GM10248 (cell line): ENCODE measurements at regions of chr21 and their contacts with region 1.

Region 1: GRCh38 chr21:32392880-32393676 is at the start of gene URB1:
- DNase-seq: peak; percentile 99
- CTCF ChIP-seq: no peak

Region 2: DNA sequence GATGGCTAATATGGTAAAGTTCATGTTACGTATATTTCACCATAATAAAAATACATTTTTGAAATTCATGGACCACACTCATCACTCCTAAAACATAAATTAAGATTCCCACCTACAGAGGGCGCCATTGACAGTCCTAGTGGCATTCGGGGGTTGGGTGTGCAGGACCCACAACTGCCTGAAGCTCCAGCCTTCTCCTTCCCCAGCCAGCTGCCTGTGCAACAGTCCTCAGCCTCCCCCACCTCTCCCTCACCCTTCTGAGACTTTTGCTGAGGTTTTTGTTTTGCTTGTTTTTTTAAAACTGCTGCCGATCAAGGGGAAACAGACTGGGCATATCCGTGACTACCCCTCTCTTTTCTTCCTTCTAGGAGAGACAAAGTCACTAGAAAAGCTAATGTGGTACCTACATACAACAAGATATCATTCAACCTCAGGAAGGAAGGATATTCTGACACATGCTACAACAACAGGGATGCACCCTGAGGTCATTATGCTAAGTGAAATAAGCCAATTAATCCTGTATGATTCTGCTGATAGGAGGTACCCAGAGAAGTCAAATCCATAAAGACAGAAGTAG is 10.2 kb after region 1 on chr21:
- CTCF ChIA-PET with region 1: interaction called, 27 read pairs
- POLR2A ChIA-PET with region 1: no interaction called
- DNase-seq: peak; percentile 51
- CTCF ChIP-seq: peak; percentile 41

Region 3: DNA sequence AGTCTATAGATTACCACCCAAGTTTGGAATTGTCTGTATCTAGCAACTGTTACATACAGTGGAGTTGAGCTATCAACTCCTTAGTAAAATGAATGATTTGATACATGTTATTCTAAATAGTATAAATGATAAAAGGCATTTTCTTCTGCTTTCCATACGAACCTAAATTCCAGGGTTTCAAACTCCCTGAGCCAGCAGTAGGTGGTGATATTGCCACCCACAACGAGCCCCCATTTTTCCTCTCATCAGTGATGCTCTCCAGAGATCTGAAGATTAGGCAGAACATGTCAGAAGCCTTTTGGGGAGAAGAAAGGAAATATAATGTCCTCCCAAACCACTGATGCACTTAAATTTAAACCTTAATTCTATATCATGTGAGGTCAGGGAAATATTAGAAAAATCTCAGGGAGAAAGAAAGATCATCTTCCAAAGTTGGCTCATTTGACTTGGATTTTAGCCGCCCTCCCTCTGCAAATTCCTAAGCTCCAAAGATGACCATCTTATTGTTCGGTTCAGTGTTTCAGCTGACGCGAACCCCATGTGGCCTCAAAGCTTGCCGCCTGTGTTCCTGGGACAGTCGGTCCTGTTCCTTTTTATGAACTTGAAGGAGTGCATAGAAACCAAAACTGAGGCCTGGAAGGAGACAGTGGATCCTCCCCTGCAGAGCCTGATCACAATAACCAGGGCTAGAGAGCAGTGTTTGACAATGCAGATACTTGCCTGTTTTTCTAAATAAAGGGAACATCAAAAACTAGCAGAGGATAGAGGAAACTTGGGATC is 21.7 kb after region 1 on chr21:
- CTCF ChIA-PET with region 1: no interaction called
- POLR2A ChIA-PET with region 1: no interaction called
- DNase-seq: no peak
- CTCF ChIP-seq: no peak